Heart right ventricle (tissue), 16 donors: ENCODE measurements at regions of chr1 and their contacts with region 1.

Region 1: DNA sequence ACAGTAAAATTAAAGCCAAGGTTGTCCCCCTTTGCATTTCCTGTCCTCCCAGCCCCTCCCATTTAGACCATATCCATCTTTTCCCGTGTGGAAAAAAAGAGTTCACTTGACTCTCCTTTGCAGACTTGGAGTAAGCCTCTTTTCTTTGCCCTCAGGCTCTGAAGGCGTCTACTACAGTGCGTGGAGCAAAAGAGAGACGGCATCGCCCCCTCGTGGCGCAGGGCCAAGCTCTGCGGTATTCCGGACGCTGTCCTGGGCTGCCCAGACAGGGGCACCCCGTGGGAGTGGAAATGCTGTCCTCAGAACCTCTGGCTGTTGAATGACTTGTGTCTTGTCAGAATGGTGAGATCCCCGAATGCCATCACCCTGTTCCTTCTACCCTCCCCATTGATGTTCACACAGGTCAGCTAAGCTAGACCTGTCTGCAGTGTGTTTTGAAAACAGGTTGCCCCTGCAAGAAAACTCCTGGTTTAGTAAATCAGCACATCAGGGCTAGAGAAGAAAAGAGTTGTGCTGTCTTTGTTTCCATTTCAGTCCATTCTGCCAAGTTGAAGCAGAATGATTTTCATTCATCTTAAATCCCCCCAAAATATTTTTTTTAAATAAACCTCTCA is 12.3 kb upstream of the GJA8 start:
- DNase-seq: peak; percentile 69 to 84
- ATAC-seq: peak; percentile 86 to 96 (median 94)
- H3K4me3 ChIP-seq: no peak overlapping the region
- H3K27ac ChIP-seq: peak overlapping the region in 1 of 10 donors; percentile 6
- H3K4me1 ChIP-seq: peaks cover 0 to 31% (median 9%) of the 10 kb centered on the region in 9 donors
- H3K27me3 ChIP-seq: peaks cover 0 to 7% (median 0%) of the 10 kb centered on the region in 7 donors
- CTCF ChIP-seq: peak; percentile 50 to 82 (median 72)

Region 2: DNA sequence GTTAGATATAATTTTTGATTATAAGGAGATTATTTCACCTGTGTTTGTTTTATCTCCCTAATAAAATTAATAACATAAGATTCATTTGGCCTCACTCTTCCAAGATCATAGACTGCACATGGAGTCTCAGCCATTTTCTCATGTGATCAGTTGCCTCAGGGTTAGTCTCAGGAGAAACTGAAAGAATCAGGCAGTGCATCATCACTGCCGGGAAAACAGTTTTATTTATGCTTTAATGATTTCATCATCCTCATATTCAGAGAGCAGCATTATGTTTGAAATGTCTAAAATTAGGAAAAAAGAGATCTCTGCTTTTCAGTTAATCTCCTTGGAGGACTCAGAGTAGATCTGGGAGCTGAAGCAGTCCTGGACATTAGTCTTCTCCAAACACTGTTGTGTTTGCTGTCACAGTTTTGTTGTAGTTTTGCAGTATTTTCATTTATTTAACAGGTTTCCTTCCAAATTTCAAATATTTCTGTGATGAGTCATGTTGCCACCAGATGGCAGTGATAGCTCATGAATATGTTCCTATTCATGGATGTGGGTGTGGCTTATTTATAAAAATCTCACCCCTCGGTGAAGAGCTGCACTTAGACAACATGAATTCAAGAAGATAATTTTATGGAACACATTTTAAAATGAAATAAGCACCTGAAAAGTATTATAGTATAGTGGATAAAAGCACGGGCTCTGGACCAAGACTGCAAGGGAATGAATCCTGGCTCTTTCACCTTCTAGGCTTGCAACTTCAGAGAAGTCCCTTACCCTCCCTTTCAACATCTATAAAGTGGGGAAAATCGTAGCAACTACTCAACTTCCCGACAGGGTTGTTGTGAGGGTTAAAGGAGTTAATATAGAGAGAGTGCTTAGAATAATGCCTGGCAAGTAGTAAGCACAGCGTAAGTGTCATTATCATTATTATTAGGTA is 616.6 kb before region 1 on chr1:
- intact Hi-C with region 1: loop called in 5 of 10 experiments (anchors 10 kb)
- DNase-seq: peak in 1 of 2 donors; percentile 40
- ATAC-seq: peak in 7 of 8 donors; percentile 38 to 82 (median 70)
- H3K4me3 ChIP-seq: no peak overlapping the region
- H3K27ac ChIP-seq: peak overlapping the region in 4 of 10 donors; percentile 18 to 66 (median 40)
- H3K4me1 ChIP-seq: peaks cover 0 to 18% (median 5%) of the 10 kb centered on the region in 9 donors
- H3K27me3 ChIP-seq: no peaks in the 10 kb centered on the region
- CTCF ChIP-seq: peak; percentile 14 to 73 (median 63)

Region 3: DNA sequence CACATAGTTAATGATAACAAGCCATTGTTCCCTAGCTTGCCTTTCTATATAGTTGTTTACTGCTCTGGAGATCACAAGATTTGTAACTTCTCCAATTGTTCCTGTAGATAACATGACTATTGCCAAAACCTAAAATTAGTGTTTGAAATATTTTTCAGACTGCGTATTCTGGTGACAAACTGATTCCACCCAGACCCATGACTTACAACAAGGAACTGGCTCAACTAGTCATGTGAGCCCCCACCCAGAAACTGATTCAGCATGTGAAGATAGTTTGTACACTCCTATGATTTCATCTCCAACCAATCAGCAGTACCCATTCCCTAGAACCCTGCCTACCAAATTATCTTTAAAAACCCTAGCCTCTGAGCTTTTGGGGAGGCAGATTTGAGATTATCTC is 480.4 kb before region 1 on chr1:
- intact Hi-C with region 1: no loop called
- DNase-seq: no peak
- ATAC-seq: no peak
- H3K4me3 ChIP-seq: no peak overlapping the region
- H3K27ac ChIP-seq: no peak overlapping the region
- H3K4me1 ChIP-seq: no peaks in the 10 kb centered on the region
- H3K27me3 ChIP-seq: peaks cover 0 to 5% (median 0%) of the 10 kb centered on the region in 7 donors
- CTCF ChIP-seq: no peak

Region 4: DNA sequence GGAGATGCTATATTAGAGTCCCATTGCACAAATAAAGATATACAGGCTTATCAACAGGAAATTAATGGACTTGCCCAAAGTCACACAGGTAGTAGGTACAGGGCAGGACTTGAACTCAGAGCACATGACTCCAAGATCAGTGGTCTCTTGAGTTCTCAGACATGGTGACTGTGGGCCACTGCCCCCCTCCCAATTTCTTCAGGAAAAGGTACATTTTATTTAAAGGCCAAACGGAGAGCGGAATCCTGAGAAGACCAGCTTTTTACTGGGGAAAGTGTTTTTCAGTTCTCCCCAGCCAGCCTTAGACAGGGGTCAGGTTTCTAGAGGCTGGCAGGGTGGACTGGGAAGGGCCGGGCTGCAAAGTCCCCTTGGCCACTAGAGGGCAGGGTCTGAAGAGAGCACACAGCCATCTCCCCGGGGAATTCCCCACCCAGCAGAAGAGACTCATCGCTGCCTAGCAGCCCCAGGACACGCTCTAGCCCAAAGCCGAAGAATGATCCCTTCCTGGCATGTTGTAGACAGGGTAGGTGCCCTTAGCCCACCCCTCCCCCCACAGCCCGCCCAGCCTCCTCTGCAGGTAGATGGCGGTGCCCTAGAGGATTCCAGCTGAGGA is 249.6 kb before region 1 on chr1:
- intact Hi-C with region 1: loop called in 8 of 10 experiments (anchors 2 to 10 kb)
- DNase-seq: peak; percentile 59 to 69
- ATAC-seq: peak; percentile 85 to 96 (median 94)
- H3K4me3 ChIP-seq: no peak overlapping the region
- H3K27ac ChIP-seq: no peak overlapping the region
- H3K4me1 ChIP-seq: peaks cover 0 to 24% (median 11%) of the 10 kb centered on the region in 9 donors
- H3K27me3 ChIP-seq: no peaks in the 10 kb centered on the region
- CTCF ChIP-seq: peak; percentile 47 to 90 (median 76)

Region 5: GRCh38 chr1:147700042-147701006 is 190.0 kb before region 1 on chr1:
- intact Hi-C with region 1: loop called in 1 of 10 experiments (anchors 5 kb)
- DNase-seq: peak; percentile 32 to 62
- ATAC-seq: peak; percentile 52 to 90 (median 82)
- H3K4me3 ChIP-seq: no peak overlapping the region
- H3K27ac ChIP-seq: peak overlapping the region in 2 of 10 donors; percentile 17 to 23
- H3K4me1 ChIP-seq: peaks cover 0 to 7% (median 0%) of the 10 kb centered on the region in 9 donors
- H3K27me3 ChIP-seq: no peaks in the 10 kb centered on the region
- CTCF ChIP-seq: peak; percentile 65 to 88 (median 85)

Region 6: GRCh38 chr1:147723691-147724323 is 166.5 kb before region 1 on chr1:
- intact Hi-C with region 1: loop called (anchors 1 to 2 kb)
- DNase-seq: peak; percentile 47 to 48
- ATAC-seq: peak; percentile 89 to 96 (median 94)
- H3K4me3 ChIP-seq: no peak overlapping the region
- H3K27ac ChIP-seq: no peak overlapping the region
- H3K4me1 ChIP-seq: peaks cover 0 to 5% (median 0%) of the 10 kb centered on the region in 9 donors
- H3K27me3 ChIP-seq: no peaks in the 10 kb centered on the region
- CTCF ChIP-seq: peak; percentile 48 to 85 (median 68)

Region 7: DNA sequence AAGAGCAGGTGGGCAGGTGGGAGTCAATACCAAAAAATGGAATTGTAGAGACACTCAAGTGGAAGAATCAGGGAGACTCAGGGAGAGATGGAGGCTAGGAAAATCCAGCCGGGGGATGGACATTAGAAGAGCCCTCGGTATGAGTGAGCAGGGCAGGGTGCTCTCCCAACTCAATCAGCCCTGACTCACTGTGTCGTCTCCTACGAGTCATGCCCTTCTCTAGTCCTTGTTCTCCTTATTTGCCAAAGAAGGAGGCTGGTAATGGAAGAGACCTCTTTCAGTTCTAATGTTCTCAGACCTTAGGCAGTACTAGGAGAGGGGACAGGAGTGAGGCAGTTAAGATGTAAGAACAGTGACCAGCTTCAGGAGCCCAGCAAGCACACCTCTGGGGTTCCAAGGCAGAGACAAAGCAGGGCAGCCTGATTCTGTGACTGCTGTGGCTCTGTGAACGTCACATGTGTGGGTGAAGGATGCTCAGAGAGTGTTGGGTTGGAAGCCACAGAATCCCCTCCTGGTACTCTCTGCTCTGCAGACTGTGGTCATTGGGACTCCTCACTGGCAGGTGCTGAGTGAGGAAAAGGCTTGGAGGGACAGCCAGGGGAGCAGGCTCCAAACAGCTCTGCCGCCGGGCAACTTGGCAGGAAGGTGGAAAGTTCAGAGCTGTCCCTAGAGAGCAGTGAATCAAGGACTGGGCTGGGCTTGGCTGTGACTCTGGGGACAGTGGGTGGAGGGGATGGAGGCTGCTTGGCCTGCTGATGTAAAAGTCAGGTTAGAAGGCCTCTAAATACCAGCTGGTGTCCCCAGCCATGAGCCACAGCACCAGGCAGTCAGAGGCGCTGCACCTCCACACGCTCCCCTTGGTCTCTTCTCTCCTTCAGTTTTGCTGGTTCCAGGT is 118.8 kb before region 1 on chr1:
- intact Hi-C with region 1: loop called in 1 of 10 experiments (anchors 5 kb)
- DNase-seq: peak; percentile 77 to 79
- ATAC-seq: peak; percentile 84 to 98 (median 95)
- H3K4me3 ChIP-seq: peak overlapping the region in 9 of 10 donors; percentile 15 to 47 (median 31)
- H3K27ac ChIP-seq: peak overlapping the region in 8 of 10 donors; percentile 37 to 73 (median 62)
- H3K4me1 ChIP-seq: peaks cover 0 to 77% (median 50%) of the 10 kb centered on the region in 9 donors
- H3K27me3 ChIP-seq: no peaks in the 10 kb centered on the region
- CTCF ChIP-seq: no peak